Sigmoid colon (tissue), 7 donors: ENCODE measurements at regions of chr18 and their contacts with region 1.

Region 1: GRCh38 chr18:35580701-35581539 is 620 bp upstream of the GALNT1 start:
- DNase-seq: peak; percentile 81
- H3K4me3 ChIP-seq: peak overlapping the region; percentile 58 to 88 (median 72)
- H3K27ac ChIP-seq: peak overlapping the region; percentile 91 to 99 (median 96)
- H3K4me1 ChIP-seq: peaks cover 0 to 31% (median 17%) of the 10 kb centered on the region in 4 donors
- H3K27me3 ChIP-seq: no peaks in the 10 kb centered on the region
- CTCF ChIP-seq: no peak
- EP300 ChIP-seq: no peak
- POLR2A ChIP-seq: no peak

Region 2: GRCh38 chr18:35071819-35072247 is 509.1 kb before region 1 on chr18:
- intact Hi-C with region 1: no loop called
- DNase-seq: no peak
- H3K4me3 ChIP-seq: no peak overlapping the region
- H3K27ac ChIP-seq: no peak overlapping the region
- H3K4me1 ChIP-seq: peaks cover 0 to 15% (median 7%) of the 10 kb centered on the region in 4 donors
- H3K27me3 ChIP-seq: no peaks in the 10 kb centered on the region
- CTCF ChIP-seq: no peak
- EP300 ChIP-seq: no peak
- POLR2A ChIP-seq: no peak

Region 3: GRCh38 chr18:35386600-35387351 is 194.1 kb before region 1 on chr18:
- intact Hi-C with region 1: loop called (anchors 10 kb)
- DNase-seq: peak; percentile 80
- H3K4me3 ChIP-seq: no peak overlapping the region
- H3K27ac ChIP-seq: no peak overlapping the region
- H3K4me1 ChIP-seq: peaks cover 0 to 8% (median 2%) of the 10 kb centered on the region in 4 donors
- H3K27me3 ChIP-seq: no peaks in the 10 kb centered on the region
- CTCF ChIP-seq: peak; percentile 51 to 79 (median 71)
- EP300 ChIP-seq: no peak
- POLR2A ChIP-seq: no peak

Region 4: GRCh38 chr18:35407871-35408481 is 172.9 kb before region 1 on chr18:
- intact Hi-C with region 1: loop called (anchors 5 kb)
- DNase-seq: no peak
- H3K4me3 ChIP-seq: no peak overlapping the region
- H3K27ac ChIP-seq: no peak overlapping the region
- H3K4me1 ChIP-seq: peaks cover 0 to 4% (median 1%) of the 10 kb centered on the region in 4 donors
- H3K27me3 ChIP-seq: no peaks in the 10 kb centered on the region
- CTCF ChIP-seq: peak in 3 of 4 experiments; percentile 43 to 72 (median 57)
- EP300 ChIP-seq: no peak
- POLR2A ChIP-seq: no peak

Region 5: GRCh38 chr18:35497370-35498197 is 83.3 kb before region 1 on chr18 and contains the start of gene INO80C:
- intact Hi-C with region 1: loop called (anchors 2 kb)
- DNase-seq: peak; percentile 95
- H3K4me3 ChIP-seq: peak within 1 kb of the TSS; percentile 55 to 74 (median 63)
- H3K27ac ChIP-seq: peak within 1 kb of the TSS; percentile 87 to 95 (median 92)
- H3K4me1 ChIP-seq: peaks cover 4 to 39% (median 19%) of the 10 kb centered on the region in 4 donors
- H3K27me3 ChIP-seq: no peaks in the 10 kb centered on the region
- CTCF ChIP-seq: no peak
- EP300 ChIP-seq: no peak
- POLR2A ChIP-seq: peak; percentile 61 to 90
- total RNA-seq, gene INO80C: 3.7 to 25.5 (median 5.2) TPM

Region 6: GRCh38 chr18:35533916-35534405 is 47.0 kb before region 1 on chr18:
- intact Hi-C with region 1: loop called (anchors 5 kb)
- DNase-seq: no peak
- H3K4me3 ChIP-seq: no peak overlapping the region
- H3K27ac ChIP-seq: no peak overlapping the region
- H3K4me1 ChIP-seq: no peaks in the 10 kb centered on the region
- H3K27me3 ChIP-seq: no peaks in the 10 kb centered on the region
- CTCF ChIP-seq: no peak
- EP300 ChIP-seq: no peak
- POLR2A ChIP-seq: no peak

Region 7: GRCh38 chr18:35624146-35624545 is 43.2 kb after region 1 on chr18:
- intact Hi-C with region 1: no loop called
- DNase-seq: no peak
- H3K4me3 ChIP-seq: no peak overlapping the region
- H3K27ac ChIP-seq: no peak overlapping the region
- H3K4me1 ChIP-seq: peaks cover 0 to 23% (median 10%) of the 10 kb centered on the region in 4 donors
- H3K27me3 ChIP-seq: no peaks in the 10 kb centered on the region
- CTCF ChIP-seq: no peak
- EP300 ChIP-seq: no peak
- POLR2A ChIP-seq: no peak

Region 8: GRCh38 chr18:35653392-35654135 is 72.6 kb after region 1 on chr18:
- intact Hi-C with region 1: loop called (anchors 10 kb)
- DNase-seq: no peak
- H3K4me3 ChIP-seq: no peak overlapping the region
- H3K27ac ChIP-seq: peak overlapping the region in 2 of 4 donors; percentile 0 to 13
- H3K4me1 ChIP-seq: peaks cover 0 to 37% (median 25%) of the 10 kb centered on the region in 4 donors
- H3K27me3 ChIP-seq: no peaks in the 10 kb centered on the region
- CTCF ChIP-seq: no peak
- EP300 ChIP-seq: no peak
- POLR2A ChIP-seq: no peak

Region 9: GRCh38 chr18:35775887-35776286 is 195.0 kb after region 1 on chr18:
- intact Hi-C with region 1: no loop called
- DNase-seq: no peak
- H3K4me3 ChIP-seq: no peak overlapping the region
- H3K27ac ChIP-seq: no peak overlapping the region
- H3K4me1 ChIP-seq: no peaks in the 10 kb centered on the region
- H3K27me3 ChIP-seq: no peaks in the 10 kb centered on the region
- CTCF ChIP-seq: no peak
- EP300 ChIP-seq: no peak
- POLR2A ChIP-seq: no peak